ENCODE measurements at regions of chr19 and their contacts with region 1.

Region 1: GRCh38 chr19:10717356-10718204 is at the start of gene DNM2:
- DNase-seq: peak; percentile 100
- H3K4me3 ChIP-seq: peak within 1 kb of the TSS; percentile 94
- H3K27ac ChIP-seq: peak within 1 kb of the TSS; percentile 66
- H3K4me1 ChIP-seq: peaks cover 13% of the 10 kb centered on the region
- CTCF ChIP-seq: peak; percentile 93
- total RNA-seq, gene DNM2: 108 and 139 TPM in 2 replicates

Region 2: DNA sequence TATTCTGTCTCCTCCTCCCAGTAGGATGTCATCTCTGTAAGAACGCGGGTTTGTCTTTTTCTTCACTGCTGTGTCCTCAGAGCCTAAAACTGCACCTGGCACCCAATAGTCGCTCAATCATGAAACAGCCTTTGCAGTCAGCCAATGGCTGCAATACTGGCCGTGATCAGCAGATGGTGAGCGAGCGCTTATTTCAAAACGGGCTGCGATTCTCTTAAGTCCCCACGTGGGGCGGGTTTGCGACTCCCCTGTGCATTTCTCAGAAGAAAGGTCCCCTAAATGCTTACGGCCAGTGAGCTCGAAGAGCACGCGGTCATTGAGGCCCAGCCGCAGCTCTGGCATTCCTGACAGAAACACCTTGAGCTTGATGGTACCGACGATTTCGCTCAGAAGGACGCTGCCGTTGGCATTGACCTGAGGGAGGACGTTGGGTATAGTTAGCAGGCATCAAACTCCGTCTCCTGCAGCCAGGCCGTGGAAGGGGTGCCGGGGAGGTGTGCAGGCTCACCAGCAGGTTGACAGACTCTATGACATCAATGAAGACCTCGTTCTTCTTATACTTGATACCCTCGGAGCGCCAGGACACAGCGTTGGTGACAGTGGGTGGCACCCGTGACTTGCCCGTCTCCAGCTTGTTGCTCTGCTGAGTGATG is 136.5 kb before region 1 on chr19:
- CTCF ChIA-PET with region 1: no interaction called
- POLR2A ChIA-PET with region 1: no interaction called
- intact Hi-C with region 1: no loop called
- DNase-seq: peak; percentile 98
- H3K4me3 ChIP-seq: no peak overlapping the region
- H3K27ac ChIP-seq: no peak overlapping the region
- H3K4me1 ChIP-seq: peaks cover 31% of the 10 kb centered on the region
- CTCF ChIP-seq: peak; percentile 100

Region 3: GRCh38 chr19:10776900-10777650 is 59.5 kb after region 1 on chr19:
- CTCF ChIA-PET with region 1: interaction called, 4 read pairs
- POLR2A ChIA-PET with region 1: interaction called, 3 read pairs
- intact Hi-C with region 1: loop called (anchors 1 kb)
- DNase-seq: peak; percentile 84
- H3K4me3 ChIP-seq: peak overlapping the region; percentile 37
- H3K27ac ChIP-seq: peak overlapping the region; percentile 97
- H3K4me1 ChIP-seq: peaks cover 57% of the 10 kb centered on the region
- CTCF ChIP-seq: no peak

Region 4: GRCh38 chr19:10828981-10829821 is 111.6 kb after region 1 on chr19:
- CTCF ChIA-PET with region 1: no interaction called
- POLR2A ChIA-PET with region 1: no interaction called
- intact Hi-C with region 1: loop called (anchors 1 kb)
- DNase-seq: peak; percentile 43
- H3K4me3 ChIP-seq: no peak overlapping the region
- H3K27ac ChIP-seq: no peak overlapping the region
- H3K4me1 ChIP-seq: no peaks in the 10 kb centered on the region
- CTCF ChIP-seq: peak; percentile 63

Region 5: DNA sequence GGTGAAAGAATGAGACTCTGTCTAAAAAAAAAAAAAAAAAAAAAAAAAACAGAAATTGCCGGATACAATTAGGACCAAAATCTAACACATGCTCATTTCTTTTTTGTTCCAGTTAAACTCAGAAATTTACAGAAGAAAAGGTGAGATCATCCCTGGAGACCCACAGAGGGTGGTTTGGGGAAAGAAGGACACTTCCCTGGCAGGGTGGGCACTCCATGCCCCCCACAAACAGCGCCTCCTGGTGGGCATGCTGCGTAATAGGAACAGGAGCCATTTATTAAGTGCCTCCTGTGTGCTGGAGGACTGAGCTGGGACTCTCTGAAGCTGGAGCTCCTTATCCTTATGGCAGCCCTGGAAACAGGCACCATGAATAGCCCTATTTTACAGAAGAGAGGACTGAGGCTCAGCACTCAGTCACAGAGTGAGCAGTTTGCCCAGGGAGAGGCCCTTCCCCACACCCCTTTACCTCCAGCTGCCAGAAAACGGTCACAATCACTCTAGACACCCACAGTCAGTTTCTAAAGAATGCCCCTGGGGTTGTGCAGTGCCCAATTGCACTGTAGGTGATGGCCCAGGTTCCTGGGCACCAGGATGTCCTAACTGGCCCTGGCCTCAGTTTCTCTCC is 140.7 kb after region 1 on chr19:
- CTCF ChIA-PET with region 1: interaction called, 4 read pairs
- POLR2A ChIA-PET with region 1: interaction called, 6 read pairs
- intact Hi-C with region 1: loop called (anchors 1 kb)
- DNase-seq: peak; percentile 73
- H3K4me3 ChIP-seq: no peak overlapping the region
- H3K27ac ChIP-seq: no peak overlapping the region
- H3K4me1 ChIP-seq: peaks cover 5% of the 10 kb centered on the region
- CTCF ChIP-seq: peak; percentile 96